ENCODE measurements at regions of chr15 and their contacts with region 1.

Region 1: DNA sequence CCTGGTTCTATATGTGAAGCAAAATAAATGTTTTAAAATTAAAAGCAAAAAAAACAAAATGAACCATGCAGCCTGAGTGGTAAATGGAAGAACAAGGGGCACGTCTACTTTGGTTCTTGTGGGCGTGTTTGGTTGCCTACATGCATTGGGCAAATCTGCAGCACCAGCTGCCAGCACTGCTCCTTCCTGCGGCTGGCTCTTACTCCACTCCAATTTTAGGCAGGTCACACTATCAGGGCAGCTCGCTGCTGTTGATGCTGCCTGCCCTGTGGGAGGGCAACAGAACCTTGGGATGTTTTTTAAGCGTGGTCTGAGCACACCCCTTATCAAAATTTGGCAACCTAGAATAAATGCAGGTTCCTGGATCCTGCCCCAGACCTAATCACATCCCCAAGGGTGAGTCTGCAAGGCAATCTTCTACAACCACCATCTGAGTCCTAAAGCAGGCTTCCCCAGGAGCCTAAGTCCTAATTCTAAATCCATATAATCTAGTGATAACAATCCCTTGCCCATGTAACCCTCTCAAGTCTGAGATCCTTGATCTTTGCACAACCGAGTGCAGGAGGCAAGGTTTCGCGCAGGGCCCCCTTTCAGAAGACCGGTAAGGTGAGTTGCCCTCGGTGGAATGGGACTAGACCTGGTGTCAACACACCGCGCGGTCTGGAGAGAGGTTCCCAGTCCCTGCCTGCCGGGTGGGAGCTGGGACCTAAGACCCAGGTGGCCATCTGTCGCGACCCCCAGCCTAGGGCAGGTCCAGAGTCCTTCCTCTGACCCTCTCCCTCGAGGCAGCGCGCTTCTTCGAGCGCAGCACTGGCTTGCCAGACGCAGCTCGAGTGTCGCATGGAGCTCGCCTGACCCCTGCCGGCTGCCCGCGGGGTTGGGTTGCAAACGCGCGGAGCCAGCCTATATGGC is 15.9 kb downstream of the IVD start:
- DNase-seq: peak; percentile 86
- ATAC-seq: peak; percentile 99
- H3K4me3 Mint-ChIP-seq: no peak overlapping the region
- H3K27ac Mint-ChIP-seq: no peak overlapping the region
- H3K4me1 Mint-ChIP-seq: peaks cover 5% of the 10 kb centered on the region
- H3K27me3 Mint-ChIP-seq: no peaks in the 10 kb centered on the region
- CTCF ChIP-seq: peak; percentile 96

Region 2: DNA sequence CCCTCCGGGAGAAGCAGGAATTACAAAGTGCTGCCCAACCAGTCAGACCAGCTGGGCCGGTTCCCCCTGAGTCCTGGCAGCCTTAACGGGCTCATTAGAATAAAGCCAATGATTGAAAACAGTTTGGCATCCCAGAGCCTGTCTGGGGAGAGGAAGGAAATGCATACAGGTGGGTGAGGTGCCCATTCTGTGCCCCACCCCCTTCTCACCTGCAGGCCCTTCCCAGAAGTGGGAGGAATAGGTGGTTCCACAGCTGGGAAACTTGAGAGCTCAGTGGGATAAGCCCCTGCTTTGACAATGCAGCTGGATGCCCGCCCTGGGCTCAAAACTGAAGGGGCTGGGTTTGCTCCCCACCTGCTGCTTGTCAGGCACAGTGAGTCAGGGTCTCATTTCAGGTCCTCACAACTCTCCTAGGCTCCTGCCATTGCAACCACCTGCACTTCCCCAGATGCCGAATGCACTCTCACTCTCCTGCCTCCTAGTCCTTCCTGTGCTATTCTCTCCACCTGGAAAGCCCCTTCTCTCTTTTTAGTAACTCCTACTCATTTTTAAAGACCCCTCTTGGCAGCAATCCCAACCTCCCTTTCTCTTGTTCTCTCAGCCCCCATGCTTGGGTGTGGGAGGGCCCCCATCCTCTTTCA is 266.1 kb before region 1 on chr15:
- CTCF ChIA-PET with region 1: no interaction called
- POLR2A ChIA-PET with region 1: no interaction called
- intact Hi-C with region 1: no loop called
- DNase-seq: no peak
- ATAC-seq: no peak
- H3K4me3 Mint-ChIP-seq: no peak overlapping the region
- H3K27ac Mint-ChIP-seq: no peak overlapping the region
- H3K4me1 Mint-ChIP-seq: no peaks in the 10 kb centered on the region
- H3K27me3 Mint-ChIP-seq: no peaks in the 10 kb centered on the region
- CTCF ChIP-seq: no peak

Region 3: DNA sequence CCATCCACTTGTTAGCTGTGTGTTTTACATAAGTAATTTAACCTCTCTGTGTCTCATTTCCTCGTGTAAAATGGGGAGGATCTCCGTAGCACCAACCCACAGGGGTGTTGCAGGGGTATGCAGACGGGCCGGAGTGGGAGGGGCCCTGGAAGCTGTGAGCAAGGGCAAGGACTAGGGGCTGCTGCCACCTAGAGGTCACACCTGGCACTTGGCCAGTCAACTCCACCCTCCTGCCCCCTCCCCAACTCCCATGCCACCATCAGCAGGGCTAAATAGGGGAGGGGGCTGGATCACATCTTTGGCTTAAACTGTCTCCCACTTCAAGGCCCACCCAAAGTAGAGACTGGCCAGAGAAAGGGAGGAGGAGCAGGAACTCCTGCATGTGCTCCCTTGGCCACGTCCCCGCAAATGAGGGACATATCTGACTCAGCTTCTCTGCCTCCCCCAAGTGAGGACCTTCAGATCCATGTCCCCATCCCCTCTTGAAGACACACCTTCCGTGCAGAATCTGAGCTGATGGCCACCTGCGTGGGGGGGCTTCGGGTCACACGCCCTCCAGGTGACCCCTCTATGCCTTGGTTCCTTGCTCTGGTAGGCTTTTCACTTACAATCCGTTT is 83.4 kb before region 1 on chr15:
- CTCF ChIA-PET with region 1: interaction called, 205 read pairs
- POLR2A ChIA-PET with region 1: interaction called, 3 read pairs
- intact Hi-C with region 1: no loop called
- DNase-seq: peak; percentile 88
- ATAC-seq: peak; percentile 96
- H3K4me3 Mint-ChIP-seq: no peak overlapping the region
- H3K27ac Mint-ChIP-seq: no peak overlapping the region
- H3K4me1 Mint-ChIP-seq: peaks cover 14% of the 10 kb centered on the region
- H3K27me3 Mint-ChIP-seq: no peaks in the 10 kb centered on the region
- CTCF ChIP-seq: peak; percentile 92

Region 4: DNA sequence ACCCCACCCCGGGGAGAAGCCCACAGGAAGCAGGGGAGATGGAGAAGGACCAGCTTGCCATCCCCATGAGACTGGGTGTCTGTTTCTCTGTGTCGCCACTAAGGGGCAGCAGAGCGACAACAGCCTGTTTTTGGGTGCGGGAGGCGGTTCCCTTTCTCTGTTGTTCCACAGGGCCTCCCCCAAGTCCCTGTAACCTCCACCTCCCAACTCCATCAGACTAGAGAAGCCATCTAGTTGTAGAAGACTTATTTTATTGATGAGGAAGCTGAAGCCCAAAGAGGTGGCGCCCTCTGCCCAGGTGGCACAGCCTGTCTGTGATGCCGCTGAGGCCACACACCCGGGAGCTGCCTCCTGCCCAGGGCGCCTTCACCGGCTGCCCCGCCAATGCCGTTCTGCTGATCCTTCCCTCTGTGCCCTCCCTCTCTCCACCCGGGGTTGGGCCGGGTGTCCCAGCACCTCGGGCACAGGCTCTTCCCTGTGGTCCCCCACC is 76.8 kb before region 1 on chr15:
- CTCF ChIA-PET with region 1: interaction called, 205 read pairs
- POLR2A ChIA-PET with region 1: interaction called, 5 read pairs
- intact Hi-C with region 1: loop called (anchors 2 kb)
- DNase-seq: peak; percentile 77
- ATAC-seq: peak; percentile 97
- H3K4me3 Mint-ChIP-seq: no peak overlapping the region
- H3K27ac Mint-ChIP-seq: no peak overlapping the region
- H3K4me1 Mint-ChIP-seq: no peaks in the 10 kb centered on the region
- H3K27me3 Mint-ChIP-seq: no peaks in the 10 kb centered on the region
- CTCF ChIP-seq: peak; percentile 85

Region 5: DNA sequence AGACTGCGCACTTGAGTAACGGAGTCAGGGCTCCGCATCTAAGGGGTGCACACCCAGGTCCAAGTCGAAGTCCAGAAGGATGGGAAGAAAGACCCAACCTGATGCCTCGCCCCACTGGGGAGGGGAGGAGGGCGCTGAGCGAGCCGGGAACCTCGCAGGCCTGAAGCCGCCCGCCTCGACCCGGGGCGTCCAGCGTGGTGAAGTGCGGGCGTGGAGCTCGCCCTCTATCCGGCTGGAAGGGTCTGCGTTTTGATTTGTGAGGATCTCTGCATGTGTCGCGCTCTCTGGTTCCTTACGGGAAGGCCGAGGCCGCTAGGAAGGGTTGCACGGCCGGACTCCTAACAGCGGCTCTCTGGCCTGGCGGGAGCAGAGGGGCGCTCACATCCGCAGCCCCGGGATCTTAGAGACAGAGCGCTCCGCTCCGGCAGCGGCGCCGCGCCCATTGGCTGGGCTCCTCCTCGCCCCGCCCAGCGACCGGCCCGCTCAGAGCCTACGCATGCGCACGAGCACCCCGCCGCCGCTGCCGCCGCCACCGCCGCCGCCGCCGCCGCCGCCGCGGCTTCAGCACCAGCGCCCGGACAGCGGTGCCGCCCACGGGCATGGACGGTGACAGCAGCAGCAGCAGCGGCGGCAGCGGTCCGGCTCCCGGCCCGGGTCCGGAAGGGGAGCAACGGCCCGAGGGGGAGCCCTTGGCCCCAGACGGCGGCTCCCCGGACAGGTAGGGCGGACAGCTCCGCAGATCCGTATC is 63.6 kb before region 1 on chr15 and contains the start of gene DISP2:
- CTCF ChIA-PET with region 1: interaction called, 11 read pairs
- POLR2A ChIA-PET with region 1: interaction called, 4 read pairs
- intact Hi-C with region 1: no loop called
- DNase-seq: peak; percentile 87
- ATAC-seq: peak; percentile 94
- H3K4me3 Mint-ChIP-seq: peak within 1 kb of the TSS; percentile 71
- H3K27ac Mint-ChIP-seq: no peak within 1 kb of the TSS
- H3K4me1 Mint-ChIP-seq: peaks cover 7% of the 10 kb centered on the region
- H3K27me3 Mint-ChIP-seq: no peaks in the 10 kb centered on the region
- CTCF ChIP-seq: no peak
- total RNA-seq, gene DISP2: 0.09 to 0.20 TPM

Region 6: GRCh38 chr15:40372981-40373380 is 48.5 kb before region 1 on chr15:
- CTCF ChIA-PET with region 1: interaction called, 74 read pairs
- POLR2A ChIA-PET with region 1: interaction called, 7 read pairs
- intact Hi-C with region 1: no loop called
- DNase-seq: no peak
- ATAC-seq: no peak
- H3K4me3 Mint-ChIP-seq: no peak overlapping the region
- H3K27ac Mint-ChIP-seq: no peak overlapping the region
- H3K4me1 Mint-ChIP-seq: peaks cover 4% of the 10 kb centered on the region
- H3K27me3 Mint-ChIP-seq: no peaks in the 10 kb centered on the region
- CTCF ChIP-seq: no peak

Region 7: DNA sequence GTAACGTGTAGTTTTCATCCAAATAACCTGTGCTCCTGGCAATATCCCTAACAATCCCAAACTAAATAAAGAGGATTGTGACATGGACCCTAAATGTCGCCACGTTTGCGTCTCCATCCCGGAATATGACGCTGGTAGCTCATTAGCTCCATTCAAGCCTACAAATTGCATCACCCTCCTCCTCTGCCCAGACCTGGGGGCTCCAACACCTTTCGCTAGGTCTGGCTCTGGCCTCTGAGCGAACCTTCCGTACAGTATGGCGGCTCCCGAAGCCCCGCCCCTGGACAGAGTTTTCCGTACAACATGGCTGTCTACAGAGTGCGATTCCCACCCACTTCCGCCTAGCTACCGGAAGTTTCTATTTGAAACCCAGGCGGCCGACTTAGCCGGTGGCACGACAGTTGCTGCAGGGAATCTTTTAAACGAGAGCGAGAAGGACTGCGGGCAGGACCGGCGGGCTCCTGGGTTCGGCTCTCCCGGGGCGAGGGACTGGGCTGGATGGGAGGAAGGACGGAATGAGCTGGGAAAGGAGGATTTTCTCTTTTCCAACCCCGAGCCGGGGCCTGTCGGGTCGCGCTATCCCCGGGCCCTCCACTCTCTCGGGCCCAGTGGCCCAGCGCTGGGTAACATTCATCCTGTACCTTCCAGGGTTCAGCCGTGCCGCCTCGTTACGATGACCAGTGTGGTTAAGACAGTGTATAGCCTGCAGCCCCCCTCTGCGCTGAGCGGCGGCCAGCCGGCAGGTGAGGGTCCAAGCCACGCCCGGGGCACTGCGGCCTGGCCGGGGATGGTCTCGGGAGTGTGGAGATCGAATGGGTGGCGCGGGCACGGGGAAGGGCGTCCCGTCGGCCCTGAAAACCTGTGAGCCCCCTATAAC is 38.7 kb before region 1 on chr15 and contains the start of gene KNSTRN:
- CTCF ChIA-PET with region 1: interaction called, 10 read pairs
- POLR2A ChIA-PET with region 1: no interaction called
- intact Hi-C with region 1: no loop called
- DNase-seq: peak; percentile 98
- ATAC-seq: peak; percentile 100
- H3K4me3 Mint-ChIP-seq: peak within 1 kb of the TSS; percentile 96
- H3K27ac Mint-ChIP-seq: peak within 1 kb of the TSS; percentile 88
- H3K4me1 Mint-ChIP-seq: peaks cover 18% of the 10 kb centered on the region
- H3K27me3 Mint-ChIP-seq: no peaks in the 10 kb centered on the region
- CTCF ChIP-seq: no peak
- total RNA-seq, gene KNSTRN: 54.2 to 55.0 TPM

Region 8: DNA sequence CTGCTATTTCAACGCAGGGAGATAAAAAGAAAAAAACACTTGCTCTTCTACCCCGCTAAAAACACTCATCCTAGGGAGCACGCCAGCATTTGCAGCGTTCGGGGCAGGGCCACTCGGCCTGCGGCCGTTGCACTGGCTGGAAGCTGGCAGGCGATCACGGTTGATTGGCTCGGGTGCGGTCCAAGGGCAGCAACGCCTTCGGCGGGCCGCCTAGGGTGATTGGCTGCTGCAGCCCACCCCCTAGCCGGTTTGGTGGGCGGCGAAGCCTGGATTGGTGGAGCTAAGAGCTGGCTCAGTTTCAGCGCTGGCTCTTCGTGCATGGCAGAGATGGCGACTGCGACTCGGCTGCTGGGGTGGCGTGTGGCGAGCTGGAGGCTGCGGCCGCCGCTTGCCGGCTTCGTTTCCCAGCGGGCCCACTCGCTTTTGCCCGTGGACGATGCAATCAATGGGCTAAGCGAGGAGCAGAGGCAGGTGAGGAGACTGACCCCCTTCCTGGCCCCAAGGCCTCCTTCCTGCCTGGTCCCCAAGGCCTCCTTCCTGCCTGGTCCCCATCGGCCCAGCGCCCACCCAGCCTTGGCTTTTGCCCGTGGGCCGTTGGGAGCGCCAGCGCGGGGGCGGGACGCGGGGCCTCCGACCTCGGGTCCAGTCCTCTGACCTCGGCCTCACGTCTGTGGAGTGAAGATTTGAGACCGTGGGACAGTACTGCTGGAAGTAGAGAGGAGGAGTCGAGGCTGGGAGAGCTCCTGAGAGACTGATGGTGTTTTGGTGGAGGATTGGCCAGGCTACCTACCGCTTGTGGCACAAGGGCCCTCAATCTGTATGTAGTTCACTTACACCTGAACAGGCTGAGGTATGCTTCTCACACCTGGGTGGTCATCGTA is 15.8 kb before region 1 on chr15 and contains the start of gene IVD:
- CTCF ChIA-PET with region 1: interaction called, 29 read pairs
- POLR2A ChIA-PET with region 1: interaction called, 7 read pairs
- intact Hi-C with region 1: no loop called
- DNase-seq: peak; percentile 96
- ATAC-seq: peak; percentile 98
- H3K4me3 Mint-ChIP-seq: peak within 1 kb of the TSS; percentile 77
- H3K27ac Mint-ChIP-seq: peak within 1 kb of the TSS; percentile 95
- H3K4me1 Mint-ChIP-seq: peaks cover 47% of the 10 kb centered on the region
- H3K27me3 Mint-ChIP-seq: no peaks in the 10 kb centered on the region
- CTCF ChIP-seq: no peak
- total RNA-seq, gene IVD: 56.9 to 65.0 TPM

Region 9: DNA sequence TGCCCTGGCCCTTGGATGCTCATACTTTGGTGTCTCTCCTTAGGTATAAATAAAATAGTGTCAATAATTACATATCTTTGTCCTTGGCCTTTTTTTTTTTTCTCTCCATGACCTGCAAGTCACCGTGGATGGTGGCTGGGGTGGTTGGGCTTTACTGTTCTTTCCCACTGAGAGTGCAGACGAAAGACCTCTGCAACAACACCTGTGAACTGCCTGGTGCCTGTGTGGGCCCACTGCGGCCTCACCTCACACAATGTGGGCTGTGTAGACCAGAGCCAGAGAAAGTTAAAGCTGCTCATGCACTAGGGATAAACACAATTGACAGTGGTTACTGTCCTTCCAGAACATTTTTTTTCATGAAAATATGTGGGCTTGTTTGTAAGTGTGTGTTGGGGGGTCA is 104.4 kb after region 1 on chr15:
- CTCF ChIA-PET with region 1: no interaction called
- POLR2A ChIA-PET with region 1: no interaction called
- intact Hi-C with region 1: no loop called
- DNase-seq: no peak
- ATAC-seq: no peak
- H3K4me3 Mint-ChIP-seq: no peak overlapping the region
- H3K27ac Mint-ChIP-seq: no peak overlapping the region
- H3K4me1 Mint-ChIP-seq: no peaks in the 10 kb centered on the region
- H3K27me3 Mint-ChIP-seq: no peaks in the 10 kb centered on the region
- CTCF ChIP-seq: no peak

Measured in activated CD8-positive, alpha-beta T cell treated with anti-CD3 and anti-CD28 coated beads for 36 hours (primary cell).